GM12878 (cell line): ENCODE measurements at regions of chr3 and their contacts with region 1.

Region 1: DNA sequence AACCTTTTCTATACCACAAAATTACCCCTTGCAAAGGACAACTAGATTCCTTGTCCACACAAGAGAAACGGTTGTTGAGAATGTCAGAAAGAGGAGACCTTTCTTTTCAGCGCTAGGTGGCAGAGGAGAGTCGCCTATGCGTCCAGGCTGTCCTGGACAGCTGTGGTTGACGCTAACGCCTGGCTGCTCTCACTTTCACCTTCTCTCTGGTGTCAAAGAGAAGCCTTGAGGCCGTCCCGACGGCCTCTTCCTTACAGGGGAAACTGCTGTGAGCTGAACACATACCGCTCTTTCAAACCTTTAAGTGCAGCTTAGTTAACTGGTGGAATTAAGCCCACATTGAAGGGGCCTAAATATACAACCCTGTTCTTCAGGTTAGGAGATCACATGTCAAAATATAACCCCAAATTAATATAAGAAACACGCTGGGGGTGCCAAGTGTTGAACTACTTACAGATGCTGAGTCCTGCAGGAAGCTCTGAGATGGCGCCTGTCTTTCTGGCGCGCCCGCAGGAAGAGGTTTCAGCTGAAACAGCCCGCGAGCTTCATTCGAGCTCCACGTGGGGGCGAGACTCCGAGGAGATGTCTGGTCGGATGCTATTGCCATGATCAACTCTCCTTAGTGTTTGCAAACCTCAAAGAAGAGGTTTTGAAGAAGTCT is 26.1 kb upstream of the KBTBD8 start:
- DNase-seq: peak; percentile 45
- ATAC-seq: peak; percentile 100
- H3K4me3 ChIP-seq: peak overlapping the region; percentile 6; the same call in 1 of the 2 replicates
- H3K27ac ChIP-seq: no peak overlapping the region
- H3K4me1 ChIP-seq: no peaks in the 10 kb centered on the region
- H3K27me3 ChIP-seq: peaks cover 0 to 2% of the 10 kb centered on the region in 2 experiments; a peak in 1 of 4 replicates
- CTCF ChIP-seq: peak; percentile 90 to 92 (median 90)
- EP300 ChIP-seq: no peak
- POLR2A ChIP-seq: no peak
- RAD21 ChIP-seq: peak; percentile 87

Region 2: DNA sequence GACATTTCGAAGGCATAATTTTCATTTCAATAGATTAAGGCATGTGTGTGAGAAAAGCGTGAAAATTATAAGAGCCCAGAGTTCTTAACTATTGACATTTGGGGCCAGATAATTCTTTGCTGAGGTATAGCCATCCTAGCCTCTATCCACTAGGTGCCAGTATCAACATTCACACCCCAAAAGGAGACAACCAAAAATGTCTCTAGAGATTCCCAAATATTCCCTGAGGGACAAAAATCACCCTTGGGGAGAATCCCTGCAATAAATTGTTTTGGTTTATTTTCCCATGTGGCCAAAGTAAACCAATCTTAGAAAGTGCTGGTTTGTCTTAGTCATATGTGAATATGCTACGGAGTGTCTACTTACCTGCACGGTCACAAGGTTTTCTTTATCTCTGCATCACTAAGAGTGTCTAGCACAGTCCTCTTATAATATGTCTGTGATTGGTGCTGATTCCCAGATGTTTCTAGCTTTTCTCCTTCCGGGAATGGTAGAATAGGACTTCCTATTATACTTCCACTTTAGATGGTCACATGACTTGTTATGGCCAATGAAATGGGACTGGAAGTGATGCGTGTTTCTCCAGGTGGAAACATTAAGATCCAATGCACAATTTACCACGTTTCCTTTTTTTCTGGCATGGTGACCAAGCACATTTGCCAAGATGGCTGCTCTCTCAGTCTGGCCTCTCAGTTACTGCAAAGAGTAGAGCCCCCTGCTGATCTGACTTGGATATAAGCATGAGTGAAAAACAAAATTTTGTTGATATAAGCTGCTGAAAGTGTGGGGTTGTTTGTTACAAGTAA is 18.0 kb after region 1 on chr3:
- CTCF ChIA-PET with region 1: interaction called, 106 read pairs
- POLR2A ChIA-PET with region 1: no interaction called
- RAD21 ChIA-PET with region 1: interaction called, 17 read pairs
- SMC1A ChIA-PET with region 1: interaction called, 34 read pairs
- in situ Hi-C with region 1: no loop called
- intact Hi-C with region 1: loop called (anchors 1 kb)
- DNase-seq: peak; percentile 40
- ATAC-seq: peak; percentile 93
- H3K4me3 ChIP-seq: peak overlapping the region; percentile 67
- H3K27ac ChIP-seq: peak overlapping the region; percentile 45
- H3K4me1 ChIP-seq: no peaks in the 10 kb centered on the region
- H3K27me3 ChIP-seq: no peaks in the 10 kb centered on the region; a peak in 1 of 4 replicates
- CTCF ChIP-seq: peak; percentile 67 to 70 (median 68)
- EP300 ChIP-seq: no peak
- POLR2A ChIP-seq: no peak
- RAD21 ChIP-seq: peak; percentile 83

Region 3: GRCh38 chr3:67006460-67006859 is 34.4 kb after region 1 on chr3:
- CTCF ChIA-PET with region 1: interaction called, 15 read pairs
- POLR2A ChIA-PET with region 1: no interaction called
- RAD21 ChIA-PET with region 1: no interaction called
- SMC1A ChIA-PET with region 1: no interaction called
- in situ Hi-C with region 1: no loop called
- intact Hi-C with region 1: no loop called
- DNase-seq: no peak
- ATAC-seq: no peak
- H3K4me3 ChIP-seq: no peak overlapping the region
- H3K27ac ChIP-seq: no peak overlapping the region
- H3K4me1 ChIP-seq: no peaks in the 10 kb centered on the region; the same call in 1 of the 2 replicates
- H3K27me3 ChIP-seq: no peaks in the 10 kb centered on the region
- CTCF ChIP-seq: no peak
- EP300 ChIP-seq: no peak
- POLR2A ChIP-seq: no peak
- RAD21 ChIP-seq: no peak

Region 4: DNA sequence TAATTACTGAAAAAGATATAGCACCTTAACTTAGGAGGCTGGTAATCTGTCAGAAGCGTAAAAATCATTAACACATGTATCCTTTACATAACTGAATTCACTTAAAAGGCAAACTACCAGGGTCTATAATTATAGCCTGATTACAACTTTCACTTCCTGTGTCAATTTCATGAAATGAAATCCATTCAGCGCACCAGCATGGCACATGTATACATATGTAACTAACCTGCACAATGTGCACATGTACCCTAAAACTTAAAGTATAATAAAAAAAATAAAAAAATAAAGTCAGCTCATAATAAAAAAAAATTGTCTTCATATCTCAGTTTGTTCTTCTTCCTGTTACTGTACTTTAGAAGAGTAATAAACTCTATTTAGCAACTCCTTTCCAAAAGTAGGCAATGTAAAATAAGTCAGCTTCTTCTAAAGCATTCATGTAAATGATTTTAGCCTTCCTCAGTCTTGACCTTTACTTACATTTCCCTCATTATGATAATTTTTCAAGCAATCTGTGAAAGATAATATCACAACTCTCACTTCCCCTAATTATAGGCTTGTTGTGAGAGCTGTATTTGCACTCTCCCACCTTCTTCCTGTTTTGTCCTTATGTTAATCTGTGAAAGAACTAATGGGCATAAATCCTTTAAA is 76.2 kb after region 1 on chr3:
- CTCF ChIA-PET with region 1: interaction called, 28 read pairs
- POLR2A ChIA-PET with region 1: no interaction called
- RAD21 ChIA-PET with region 1: interaction called, 3 read pairs
- SMC1A ChIA-PET with region 1: interaction called, 16 read pairs
- in situ Hi-C with region 1: no loop called
- intact Hi-C with region 1: no loop called
- DNase-seq: peak; percentile 47
- ATAC-seq: peak; percentile 94
- H3K4me3 ChIP-seq: no peak overlapping the region
- H3K27ac ChIP-seq: peak overlapping the region; percentile 54
- H3K4me1 ChIP-seq: peaks cover 24% of the 10 kb centered on the region
- H3K27me3 ChIP-seq: no peaks in the 10 kb centered on the region
- CTCF ChIP-seq: no peak
- EP300 ChIP-seq: peak in 1 of 2 experiments; percentile 78; a peak in 3 of 4 replicates
- POLR2A ChIP-seq: no peak
- RAD21 ChIP-seq: no peak

Region 5: DNA sequence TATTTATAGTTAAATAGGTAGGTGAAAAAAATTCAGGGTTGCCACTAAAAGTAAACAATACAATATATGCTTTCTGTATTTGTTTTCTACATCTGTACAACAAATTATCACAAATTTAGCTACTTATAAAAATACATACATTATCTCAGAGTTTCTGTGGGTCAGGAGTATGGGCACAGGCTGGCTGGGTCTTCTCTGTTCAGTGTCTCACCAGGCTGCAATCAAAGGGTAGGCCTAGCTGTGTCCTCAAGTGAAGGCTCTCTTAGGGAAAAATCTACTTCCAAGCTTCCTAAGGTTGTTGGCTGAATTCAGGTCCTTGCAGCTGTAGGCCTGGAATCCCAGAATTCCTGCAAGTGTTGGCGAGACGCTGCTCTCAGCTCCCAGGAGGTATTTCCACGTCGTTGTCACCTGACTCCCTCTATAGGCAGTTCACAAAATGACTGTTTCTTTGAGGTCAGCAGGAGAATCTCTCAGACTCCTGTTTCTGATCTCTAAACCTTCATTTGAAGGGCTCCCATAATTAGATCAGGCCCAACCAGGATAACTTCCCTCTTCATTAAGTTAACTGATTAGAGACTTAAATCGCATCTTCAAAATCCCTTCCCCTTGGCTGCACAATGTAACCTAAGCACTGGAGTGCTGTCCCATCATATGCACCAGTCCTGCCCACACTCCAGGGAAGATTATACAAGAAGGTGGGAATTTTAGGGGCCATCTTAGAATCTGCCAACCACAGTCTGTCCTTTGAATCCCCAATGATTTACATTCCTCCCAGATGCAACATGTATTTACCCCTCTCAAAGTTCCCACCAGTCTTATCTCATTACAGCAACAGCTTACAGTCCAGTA is 385.8 kb after region 1 on chr3:
- CTCF ChIA-PET with region 1: interaction called, 5 read pairs
- POLR2A ChIA-PET with region 1: no interaction called
- RAD21 ChIA-PET with region 1: no interaction called
- SMC1A ChIA-PET with region 1: no interaction called
- in situ Hi-C with region 1: no loop called
- intact Hi-C with region 1: loop called (anchors 5 kb)
- DNase-seq: no peak
- ATAC-seq: peak; percentile 75
- H3K4me3 ChIP-seq: no peak overlapping the region
- H3K27ac ChIP-seq: no peak overlapping the region
- H3K4me1 ChIP-seq: no peaks in the 10 kb centered on the region; the same call in 1 of the 2 replicates
- H3K27me3 ChIP-seq: no peaks in the 10 kb centered on the region; a peak in 1 of 4 replicates
- CTCF ChIP-seq: peak; percentile 51 to 53 (median 53); a peak in 5 of 6 replicates
- EP300 ChIP-seq: no peak
- POLR2A ChIP-seq: no peak
- RAD21 ChIP-seq: peak; percentile 57

Region 6: GRCh38 chr3:68614087-68614486 is 1642.1 kb after region 1 on chr3:
- CTCF ChIA-PET with region 1: no interaction called
- POLR2A ChIA-PET with region 1: no interaction called
- RAD21 ChIA-PET with region 1: no interaction called
- SMC1A ChIA-PET with region 1: no interaction called
- in situ Hi-C with region 1: no loop called
- intact Hi-C with region 1: no loop called
- DNase-seq: no peak
- ATAC-seq: no peak
- H3K4me3 ChIP-seq: no peak overlapping the region
- H3K27ac ChIP-seq: no peak overlapping the region
- H3K4me1 ChIP-seq: no peaks in the 10 kb centered on the region
- H3K27me3 ChIP-seq: no peaks in the 10 kb centered on the region; a peak in 1 of 4 replicates
- CTCF ChIP-seq: no peak
- EP300 ChIP-seq: no peak
- POLR2A ChIP-seq: no peak
- RAD21 ChIP-seq: no peak

Region 7: GRCh38 chr3:68876112-68876713 is 1904.2 kb after region 1 on chr3:
- CTCF ChIA-PET with region 1: interaction called, 13 read pairs
- POLR2A ChIA-PET with region 1: no interaction called
- RAD21 ChIA-PET with region 1: interaction called, 6 read pairs
- SMC1A ChIA-PET with region 1: no interaction called
- in situ Hi-C with region 1: no loop called
- intact Hi-C with region 1: no loop called
- DNase-seq: peak; percentile 17
- ATAC-seq: peak; percentile 91
- H3K4me3 ChIP-seq: no peak overlapping the region
- H3K27ac ChIP-seq: no peak overlapping the region
- H3K4me1 ChIP-seq: no peaks in the 10 kb centered on the region
- H3K27me3 ChIP-seq: peaks cover 0 to 3% of the 10 kb centered on the region in 2 experiments; a peak in 1 of 4 replicates
- CTCF ChIP-seq: peak; percentile 80 to 87 (median 82)
- EP300 ChIP-seq: no peak
- POLR2A ChIP-seq: no peak
- RAD21 ChIP-seq: peak; percentile 92